IMR-90 (cell line): ENCODE measurements at regions of chr10 and their contacts with region 1.

Region 1: DNA sequence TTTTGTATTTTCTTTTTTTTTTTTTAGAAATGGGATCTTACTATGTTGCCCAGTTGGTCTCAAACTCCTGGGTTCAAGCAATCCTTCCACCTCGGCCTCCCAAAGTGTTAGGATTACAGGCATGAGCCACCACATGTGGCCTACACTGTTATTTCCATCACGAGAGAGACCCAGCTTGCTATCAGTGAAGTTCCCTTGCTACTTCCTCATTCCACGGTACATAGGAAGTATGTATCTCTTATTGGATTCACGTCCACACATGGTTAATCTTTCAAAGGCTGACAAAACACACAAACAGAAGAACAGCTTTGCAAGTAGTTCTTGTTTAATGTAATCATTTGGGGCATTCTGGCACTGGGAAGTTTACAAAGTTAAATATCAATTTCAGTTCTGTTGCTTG is 50.9 kb downstream of the DCLRE1A start:
- DNase-seq: peak; percentile 2
- ATAC-seq: no peak; the same call in 1 of the 2 replicates
- H3K4me3 ChIP-seq: no peak overlapping the region
- H3K27ac ChIP-seq: no peak overlapping the region
- H3K4me1 ChIP-seq: no peaks in the 10 kb centered on the region; the same call in 1 of the 2 replicates
- H3K27me3 ChIP-seq: peaks cover 16% of the 10 kb centered on the region
- CTCF ChIP-seq: no peak
- POLR2A ChIP-seq: no peak
- RAD21 ChIP-seq: no peak

Region 2: DNA sequence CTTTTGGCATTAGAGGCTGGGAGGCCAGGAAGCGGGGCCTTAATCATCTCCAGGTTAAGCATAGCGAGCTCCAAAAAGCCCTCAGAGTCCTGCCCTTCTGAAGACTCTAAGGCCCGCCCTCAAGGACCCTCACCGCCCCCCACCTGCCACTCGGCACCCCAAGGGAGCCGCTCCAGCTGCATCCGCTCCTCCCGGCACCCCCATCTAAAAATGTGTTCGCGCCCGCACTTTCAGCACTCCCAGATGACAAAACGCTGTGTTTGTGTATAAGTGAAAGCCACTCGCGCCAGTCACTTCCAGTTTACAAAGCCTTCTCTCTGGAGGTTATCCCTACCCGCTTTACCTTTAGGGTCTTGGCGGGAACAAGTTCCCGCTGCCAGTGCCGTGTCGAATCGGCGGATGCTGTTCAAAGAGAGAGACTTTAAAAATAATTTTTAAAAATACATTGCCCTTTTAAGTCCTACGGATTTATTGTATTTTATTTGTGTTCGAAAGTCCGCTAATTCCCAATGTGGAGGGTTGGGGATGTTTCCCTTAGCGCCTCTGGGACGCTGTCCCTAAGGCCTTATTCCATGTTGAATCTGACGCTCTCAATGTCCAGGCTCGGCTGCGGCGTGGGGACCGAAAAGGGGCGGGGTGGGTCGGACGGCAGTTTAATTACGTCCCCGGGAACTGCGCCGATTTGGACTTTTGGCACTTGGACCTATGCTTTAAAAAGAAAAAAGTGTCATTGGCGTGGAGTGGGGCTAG is 51.2 kb after region 1 on chr10 and contains the starts of genes DCLRE1A and NHLRC2:
- CTCF ChIA-PET with region 1: interaction called, 3 read pairs
- POLR2A ChIA-PET with region 1: no interaction called
- dilution Hi-C with region 1: no loop called
- in situ Hi-C with region 1: no loop called
- intact Hi-C with region 1: loop called (anchors 1 kb)
- DNase-seq: peak; percentile 75
- ATAC-seq: peak; percentile 87
- H3K4me3 ChIP-seq: peak within 1 kb of the TSS; percentile 92
- H3K27ac ChIP-seq: peak within 1 kb of the TSS; percentile 91
- H3K4me1 ChIP-seq: peaks cover 2% of the 10 kb centered on the region; the same call in 1 of the 2 replicates
- H3K27me3 ChIP-seq: no peaks in the 10 kb centered on the region
- CTCF ChIP-seq: no peak
- POLR2A ChIP-seq: no peak
- RAD21 ChIP-seq: no peak
- total RNA-seq, gene DCLRE1A: 6.3 and 7.8 TPM in 2 replicates
- total RNA-seq, gene NHLRC2: 11.8 and 15.3 TPM in 2 replicates

Region 3: DNA sequence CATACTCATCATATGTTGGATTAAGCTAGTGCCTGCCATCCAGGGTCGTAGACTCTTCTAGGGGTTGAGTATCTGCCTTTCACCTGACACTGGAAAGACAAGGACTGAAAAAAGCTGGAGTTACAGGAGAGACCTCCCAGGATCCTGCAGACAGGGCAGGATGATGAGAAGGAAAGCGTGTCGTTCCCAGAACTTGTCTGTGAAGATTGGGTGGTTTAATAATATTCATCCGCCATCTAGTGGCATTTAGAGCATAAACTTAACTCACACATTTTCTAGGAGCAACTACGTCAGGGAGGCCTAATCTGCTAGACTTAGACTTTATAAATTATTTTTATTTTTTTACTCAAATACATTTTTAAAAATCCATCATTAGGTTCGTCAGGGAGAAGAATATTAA is 300.3 kb after region 1 on chr10:
- CTCF ChIA-PET with region 1: interaction called, 10 read pairs
- POLR2A ChIA-PET with region 1: interaction called, 3 read pairs
- dilution Hi-C with region 1: no loop called
- in situ Hi-C with region 1: loop called (anchors 5 kb)
- intact Hi-C with region 1: loop called (anchors 1 kb)
- DNase-seq: peak; percentile 67
- ATAC-seq: peak; percentile 85
- H3K4me3 ChIP-seq: no peak overlapping the region
- H3K27ac ChIP-seq: no peak overlapping the region
- H3K4me1 ChIP-seq: no peaks in the 10 kb centered on the region
- H3K27me3 ChIP-seq: peaks cover 29% of the 10 kb centered on the region
- CTCF ChIP-seq: peak; percentile 74
- POLR2A ChIP-seq: no peak
- RAD21 ChIP-seq: peak; percentile 83

Region 4: DNA sequence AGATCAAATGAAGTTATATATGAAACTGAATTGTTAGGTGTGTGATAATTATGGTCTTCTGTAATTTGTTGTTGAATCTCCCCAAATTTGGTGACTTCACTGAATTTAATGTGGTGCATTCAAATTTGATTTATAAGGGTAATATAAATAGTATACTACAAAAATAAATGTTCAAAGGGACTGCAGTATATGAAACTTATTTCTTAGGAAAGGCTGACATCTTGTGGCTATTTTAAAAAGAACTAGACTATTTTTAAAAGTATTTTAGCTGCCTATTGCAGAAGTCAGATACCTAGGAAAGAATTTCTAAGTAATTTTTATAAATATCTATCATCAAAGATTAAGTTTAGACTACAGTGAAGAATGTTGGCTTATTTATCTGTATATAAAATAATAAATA is 1326.8 kb after region 1 on chr10:
- CTCF ChIA-PET with region 1: no interaction called
- POLR2A ChIA-PET with region 1: no interaction called
- dilution Hi-C with region 1: no loop called
- in situ Hi-C with region 1: no loop called
- intact Hi-C with region 1: loop called (anchors 10 kb)
- DNase-seq: peak; percentile 37
- ATAC-seq: peak; percentile 46
- H3K4me3 ChIP-seq: no peak overlapping the region
- H3K27ac ChIP-seq: no peak overlapping the region
- H3K4me1 ChIP-seq: no peaks in the 10 kb centered on the region
- H3K27me3 ChIP-seq: no peaks in the 10 kb centered on the region
- CTCF ChIP-seq: peak; percentile 56
- POLR2A ChIP-seq: no peak
- RAD21 ChIP-seq: peak; percentile 67